ENCODE measurements at regions of chr1 and their contacts with region 1.

Region 1: GRCh38 chr1:193183019-193183627 is 3.3 kb downstream of the B3GALT2 start:
- DNase-seq: peak; percentile 76
- H3K4me3 Mint-ChIP-seq: no peak overlapping the region
- H3K27ac Mint-ChIP-seq: no peak overlapping the region
- H3K4me1 Mint-ChIP-seq: peaks cover 23% of the 10 kb centered on the region
- H3K27me3 Mint-ChIP-seq: no peaks in the 10 kb centered on the region

Region 2: DNA sequence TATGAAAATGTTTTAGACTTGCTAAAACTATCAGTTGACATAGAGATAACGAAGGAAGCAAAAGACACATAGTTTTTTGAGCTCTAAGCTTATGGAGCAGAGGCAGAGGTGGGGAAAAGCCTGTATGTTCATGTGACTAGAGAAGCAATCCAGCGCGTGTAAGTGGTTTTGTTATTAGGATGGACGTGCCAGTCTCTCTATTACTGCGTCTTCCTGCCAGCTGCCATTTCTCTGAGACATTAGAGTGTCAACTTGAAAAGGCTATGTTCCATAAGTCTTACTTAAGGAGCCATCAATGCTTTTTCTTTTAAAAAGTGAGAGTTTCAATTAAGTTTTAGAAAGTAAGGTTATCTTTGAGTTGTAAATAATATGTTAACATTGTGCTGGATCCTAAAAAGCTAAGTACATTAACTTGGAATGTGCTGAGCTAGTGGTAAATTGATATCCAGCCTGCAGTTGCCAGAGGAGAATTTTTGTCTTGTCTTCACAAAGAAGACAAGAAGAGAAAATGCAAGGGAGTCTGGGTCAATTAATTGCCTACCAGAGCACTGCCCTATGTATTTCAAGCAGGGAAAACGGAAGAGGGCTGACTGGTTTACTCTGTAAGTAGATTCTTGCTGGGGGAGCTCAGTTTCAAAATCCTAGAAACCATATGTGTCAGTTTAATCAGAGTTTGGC is 165.1 kb after region 1 on chr1:
- intact Hi-C with region 1: loop called (anchors 10 kb)
- DNase-seq: no peak
- H3K4me3 Mint-ChIP-seq: no peak overlapping the region
- H3K27ac Mint-ChIP-seq: no peak overlapping the region
- H3K4me1 Mint-ChIP-seq: no peaks in the 10 kb centered on the region
- H3K27me3 Mint-ChIP-seq: peaks cover 2% of the 10 kb centered on the region

Region 3: DNA sequence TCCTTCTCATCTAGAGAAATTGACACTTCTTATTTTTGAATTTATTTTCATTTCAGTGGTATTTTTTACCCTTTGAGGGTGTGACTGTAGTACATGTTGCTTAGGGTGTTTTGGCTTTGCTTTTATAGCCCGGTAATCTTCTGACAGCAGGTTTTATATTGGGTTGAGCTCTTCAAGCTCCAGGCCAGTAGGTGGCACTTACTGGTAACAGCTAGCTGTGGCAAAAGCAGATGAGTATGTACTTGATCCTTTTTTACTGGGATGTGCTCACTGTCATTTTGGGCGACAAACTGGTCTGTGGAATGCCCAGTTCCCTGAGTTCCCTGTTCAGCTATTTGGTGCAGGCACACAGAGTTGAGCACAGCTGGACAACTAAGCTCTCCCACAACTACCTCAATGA is 919.5 kb after region 1 on chr1:
- intact Hi-C with region 1: loop called (anchors 10 kb)
- DNase-seq: no peak
- H3K4me3 Mint-ChIP-seq: no peak overlapping the region
- H3K27ac Mint-ChIP-seq: no peak overlapping the region
- H3K4me1 Mint-ChIP-seq: no peaks in the 10 kb centered on the region
- H3K27me3 Mint-ChIP-seq: no peaks in the 10 kb centered on the region

Measured in activated CD4-positive, alpha-beta T cell treated with anti-CD3 and anti-CD28 coated beads, Interleukin-2, amount 10 ng/mL, durations not matched to agents 24 days and 14 days (primary cell).